ENCODE measurements at regions of chr14 and their contacts with region 1.

Region 1: DNA sequence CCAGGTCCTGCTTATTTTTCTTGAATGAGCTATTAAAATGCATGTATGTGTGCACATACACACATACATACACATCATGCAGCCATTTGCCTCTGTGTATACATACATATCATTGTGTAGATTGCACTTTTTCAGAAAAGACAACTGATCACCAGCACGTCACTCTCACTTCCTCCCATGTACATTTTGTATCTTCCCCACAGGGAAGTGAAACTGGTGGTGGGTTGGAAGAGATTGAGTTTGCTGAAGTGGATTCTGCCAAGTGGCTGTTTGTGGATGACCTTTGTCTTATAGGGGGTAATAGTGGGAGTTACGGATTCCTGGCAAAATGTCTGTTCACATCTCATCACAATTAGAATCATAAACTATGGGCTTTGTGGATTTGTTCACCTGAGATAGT is 448.6 kb downstream of the RAD51B start:
- DNase-seq: peak in 1 of 9 donors; percentile 23
- ATAC-seq: peak; percentile 79
- H3K4me3 ChIP-seq: no peak overlapping the region
- H3K4me3 Mint-ChIP-seq: peak overlapping the region in 9 of 10 donors; percentile 4 to 68 (median 57)
- H3K27ac ChIP-seq: peak overlapping the region; percentile 40
- H3K27ac Mint-ChIP-seq: peak overlapping the region; percentile 11 to 94 (median 88)
- H3K4me1 ChIP-seq: peaks cover 10 to 43% of the 10 kb centered on the region in 2 donors
- H3K4me1 Mint-ChIP-seq: peaks cover 31 to 79% (median 74%) of the 10 kb centered on the region in 7 donors
- H3K27me3 ChIP-seq: no peaks in the 10 kb centered on the region
- H3K27me3 Mint-ChIP-seq: no peaks in the 10 kb centered on the region

Region 2: DNA sequence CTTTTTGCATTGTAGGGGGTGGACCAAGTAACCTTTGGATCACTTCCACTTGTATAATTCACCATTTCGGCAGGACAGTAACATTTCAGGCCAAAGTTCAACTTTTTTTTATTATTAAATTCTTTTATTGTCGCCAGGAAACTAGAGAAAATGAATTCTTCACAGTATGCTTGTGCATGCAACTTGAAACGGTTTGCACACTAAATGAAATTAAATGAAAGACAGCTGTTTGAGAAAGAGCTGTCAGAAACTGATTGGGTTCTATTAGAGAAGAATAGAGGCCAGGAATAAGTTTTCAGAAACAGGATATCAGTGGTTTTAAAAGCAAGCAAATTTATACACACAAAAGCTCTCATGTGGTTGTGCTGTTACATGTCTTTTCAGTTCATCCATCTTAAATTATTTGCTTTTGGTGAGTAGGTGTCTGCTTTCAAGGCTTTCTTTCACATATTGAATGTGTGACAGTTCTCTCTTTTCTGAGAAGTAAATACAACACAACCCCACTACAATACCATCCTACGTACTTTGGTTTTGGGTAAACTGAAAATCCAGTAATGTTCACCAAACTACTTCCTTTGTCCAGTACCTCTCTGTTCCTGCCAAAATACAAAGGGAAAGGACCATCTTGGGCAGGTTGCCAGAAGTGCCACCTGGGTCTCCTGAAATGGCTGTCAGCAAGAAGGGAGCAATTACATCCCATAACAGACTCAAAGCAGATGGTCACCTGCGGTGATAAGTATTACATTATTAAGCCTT is 156.9 kb before region 1 on chr14:
- CTCF ChIA-PET with region 1: no interaction called
- POLR2A ChIA-PET with region 1: no interaction called
- intact Hi-C with region 1: no loop called
- DNase-seq: no peak
- ATAC-seq: no peak
- H3K4me3 ChIP-seq: no peak overlapping the region
- H3K4me3 Mint-ChIP-seq: no peak overlapping the region
- H3K27ac ChIP-seq: no peak overlapping the region
- H3K27ac Mint-ChIP-seq: no peak overlapping the region
- H3K4me1 ChIP-seq: no peaks in the 10 kb centered on the region
- H3K4me1 Mint-ChIP-seq: peaks cover 0 to 27% (median 8%) of the 10 kb centered on the region in 7 donors
- H3K27me3 ChIP-seq: no peaks in the 10 kb centered on the region
- H3K27me3 Mint-ChIP-seq: no peaks in the 10 kb centered on the region

Region 3: GRCh38 chr14:68124979-68125731 is 143.0 kb before region 1 on chr14:
- CTCF ChIA-PET with region 1: no interaction called
- POLR2A ChIA-PET with region 1: no interaction called
- intact Hi-C with region 1: no loop called
- DNase-seq: no peak
- ATAC-seq: no peak
- H3K4me3 ChIP-seq: no peak overlapping the region
- H3K4me3 Mint-ChIP-seq: no peak overlapping the region
- H3K27ac ChIP-seq: no peak overlapping the region
- H3K27ac Mint-ChIP-seq: no peak overlapping the region
- H3K4me1 ChIP-seq: no peaks in the 10 kb centered on the region
- H3K4me1 Mint-ChIP-seq: no peaks in the 10 kb centered on the region
- H3K27me3 ChIP-seq: no peaks in the 10 kb centered on the region
- H3K27me3 Mint-ChIP-seq: no peaks in the 10 kb centered on the region

Region 4: DNA sequence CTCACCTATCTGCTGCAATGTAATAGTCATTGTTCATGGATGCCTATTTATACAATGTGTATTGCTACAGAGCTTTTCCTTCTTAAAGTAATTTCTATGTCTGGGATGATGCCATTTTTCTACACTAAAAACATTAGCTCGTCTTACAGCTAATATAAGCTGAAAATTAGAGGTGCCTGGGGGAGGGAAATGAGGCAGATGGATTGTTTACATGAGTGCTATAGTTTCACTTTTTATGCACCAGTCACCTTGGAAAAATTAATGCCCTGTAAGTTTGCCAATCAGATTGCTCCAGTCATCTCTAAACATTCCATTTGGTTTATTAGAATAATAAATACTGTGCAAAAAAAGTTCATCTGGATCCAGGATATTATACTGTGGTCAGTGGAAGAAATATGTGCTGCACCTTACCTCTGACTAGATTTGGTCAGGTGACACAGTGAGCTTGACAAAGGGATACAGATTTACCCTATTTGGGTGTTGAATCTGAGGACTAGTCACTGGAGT is 12.4 kb before region 1 on chr14:
- CTCF ChIA-PET with region 1: interaction called, 3 read pairs
- POLR2A ChIA-PET with region 1: interaction called, 5 read pairs
- intact Hi-C with region 1: loop called in 1 of 2 experiments (anchors 1 kb)
- DNase-seq: no peak
- ATAC-seq: no peak
- H3K4me3 ChIP-seq: no peak overlapping the region
- H3K4me3 Mint-ChIP-seq: peak overlapping the region in 5 of 10 donors; percentile 25 to 60 (median 38)
- H3K27ac ChIP-seq: no peak overlapping the region
- H3K27ac Mint-ChIP-seq: peak overlapping the region in 5 of 9 donors; percentile 9 to 74 (median 43)
- H3K4me1 ChIP-seq: peaks cover 0 to 53% of the 10 kb centered on the region in 2 donors
- H3K4me1 Mint-ChIP-seq: peaks cover 28 to 89% (median 81%) of the 10 kb centered on the region in 7 donors
- H3K27me3 ChIP-seq: no peaks in the 10 kb centered on the region
- H3K27me3 Mint-ChIP-seq: no peaks in the 10 kb centered on the region